Heart left ventricle (tissue), 16 donors: ENCODE measurements at regions of chr5 and their contacts with region 1.

Region 1: GRCh38 chr5:134370871-134371833 is at the start of gene UBE2B:
- DNase-seq: peak; percentile 97 to 99 (median 99)
- ATAC-seq: peak; percentile 92 to 94 (median 92)
- H3K4me3 ChIP-seq: peak within 1 kb of the TSS; percentile 70 to 99 (median 92)
- H3K27ac ChIP-seq: peak within 1 kb of the TSS; percentile 92 to 100 (median 99)
- H3K4me1 ChIP-seq: peaks cover 0 to 55% (median 29%) of the 10 kb centered on the region in 12 donors
- H3K27me3 ChIP-seq: no peaks in the 10 kb centered on the region
- CTCF ChIP-seq: no peak
- POLR2A ChIP-seq: peak in 1 of 2 donors; percentile 55
- total RNA-seq, gene UBE2B: 62.8 to 230 (median 188) TPM

Region 2: DNA sequence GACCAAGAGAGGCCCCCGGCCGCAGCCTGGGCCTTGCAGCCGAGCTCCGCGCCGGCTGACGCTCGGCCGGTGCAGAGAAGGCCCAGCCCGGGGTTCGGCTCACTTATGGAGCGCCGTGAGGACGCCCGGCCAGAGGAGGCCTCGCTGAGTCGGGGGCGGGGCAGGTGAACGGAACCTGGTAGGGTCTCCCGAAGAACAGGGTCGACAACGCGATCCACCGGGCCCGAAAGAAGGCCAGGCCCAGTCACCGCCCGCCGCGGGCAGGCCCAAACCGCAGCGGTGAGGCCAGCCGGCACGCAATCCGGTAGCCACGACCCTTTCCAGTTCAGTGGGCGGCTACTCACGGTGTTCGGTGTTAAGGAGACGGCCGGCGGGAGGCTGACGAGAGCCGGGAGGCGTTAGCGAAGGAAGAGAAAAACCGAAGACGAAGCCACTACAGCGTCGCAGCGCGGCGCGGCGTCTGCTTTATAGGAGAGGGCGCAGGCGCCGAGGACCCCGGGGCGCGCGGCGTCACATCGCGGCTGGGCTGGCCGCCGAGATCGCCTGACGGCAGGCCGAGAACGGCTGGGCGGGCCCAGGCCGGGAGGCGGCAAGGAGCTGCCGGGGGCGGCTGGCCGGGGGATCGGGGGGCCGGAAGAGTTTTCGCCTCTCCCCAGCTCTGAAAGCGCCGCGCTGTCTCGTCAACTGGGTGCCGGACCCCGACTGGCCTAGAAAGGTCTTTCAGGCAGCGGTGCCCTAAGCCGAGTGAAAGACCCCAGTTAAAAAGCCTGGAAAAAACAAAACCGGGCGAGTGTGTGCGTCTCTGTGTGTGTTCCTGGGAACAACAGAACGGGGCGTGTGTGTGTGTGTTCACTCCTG is 194.4 kb before region 1 on chr5 and contains the start of gene SKP1:
- intact Hi-C with region 1: loop called in 1 of 10 experiments (anchors 5 kb)
- DNase-seq: peak; percentile 82 to 92 (median 87)
- ATAC-seq: peak; percentile 51 to 92 (median 88)
- H3K4me3 ChIP-seq: peak within 1 kb of the TSS; percentile 70 to 99 (median 96)
- H3K27ac ChIP-seq: peak within 1 kb of the TSS; percentile 95 to 100 (median 100)
- H3K4me1 ChIP-seq: peaks cover 3 to 46% (median 22%) of the 10 kb centered on the region in 12 donors
- H3K27me3 ChIP-seq: no peaks in the 10 kb centered on the region
- CTCF ChIP-seq: peak in 1 of 12 donors; percentile 14
- POLR2A ChIP-seq: peak; percentile 51 to 95
- total RNA-seq, gene SKP1: 290 to 533 (median 459) TPM

Region 3: GRCh38 chr5:134225618-134226440 is 145.3 kb before region 1 on chr5 and contains the start of gene PPP2CA:
- intact Hi-C with region 1: loop called in 1 of 10 experiments (anchors 2 kb)
- DNase-seq: peak; percentile 98 to 100 (median 99)
- ATAC-seq: peak; percentile 92 to 97 (median 96)
- H3K4me3 ChIP-seq: peak within 1 kb of the TSS; percentile 64 to 100 (median 94)
- H3K27ac ChIP-seq: peak within 1 kb of the TSS; percentile 98 to 100 (median 99)
- H3K4me1 ChIP-seq: peaks cover 4 to 69% (median 49%) of the 10 kb centered on the region in 12 donors
- H3K27me3 ChIP-seq: no peaks in the 10 kb centered on the region
- CTCF ChIP-seq: peak in 2 of 12 donors; percentile 7 to 9
- POLR2A ChIP-seq: peak; percentile 54 to 75
- total RNA-seq, gene PPP2CA: 143 to 219 (median 180) TPM

Region 4: DNA sequence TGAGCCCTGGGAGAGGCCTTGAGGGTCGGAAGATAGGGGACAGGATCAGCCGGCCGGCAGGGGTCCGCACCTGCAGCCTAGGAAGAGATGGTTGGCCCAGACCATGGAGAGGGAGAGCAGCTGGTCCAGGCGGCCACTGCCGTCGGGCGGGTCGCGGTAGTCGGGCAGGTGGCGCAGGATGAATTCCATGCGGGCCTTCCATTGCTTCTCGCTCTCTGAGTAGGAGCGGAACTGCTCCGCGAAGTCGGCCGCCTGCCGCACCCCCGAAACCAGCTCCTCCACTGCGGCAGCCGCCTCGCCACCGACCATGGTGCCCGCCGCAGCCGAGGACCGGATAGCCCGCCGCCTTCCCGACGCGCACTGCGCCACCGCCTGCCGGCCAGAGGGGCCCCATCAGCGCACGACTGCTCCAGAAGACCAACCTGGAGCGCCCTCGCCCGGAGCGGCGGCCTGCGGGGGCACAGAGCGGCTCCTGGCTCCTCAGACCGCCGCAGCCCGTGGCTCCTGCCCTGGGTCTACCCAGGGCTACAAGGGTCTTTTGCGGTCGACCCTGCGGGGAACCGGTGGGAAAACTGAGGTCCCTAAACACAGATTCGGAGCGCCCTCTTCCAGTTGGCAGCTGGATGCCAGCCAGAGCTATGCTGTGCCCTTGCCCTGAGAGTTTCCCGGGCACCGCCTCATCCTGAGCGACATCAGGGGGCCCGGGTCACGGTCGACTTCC is 40.6 kb after region 1 on chr5 and contains the start of gene CDKN2AIPNL:
- intact Hi-C with region 1: loop called in 1 of 10 experiments (anchors 5 kb)
- DNase-seq: peak; percentile 92 to 97 (median 94)
- ATAC-seq: peak; percentile 97 to 100 (median 99)
- H3K4me3 ChIP-seq: peak within 1 kb of the TSS; percentile 62 to 98 (median 76)
- H3K27ac ChIP-seq: peak within 1 kb of the TSS; percentile 69 to 97 (median 90)
- H3K4me1 ChIP-seq: peaks cover 0 to 37% (median 22%) of the 10 kb centered on the region in 12 donors
- H3K27me3 ChIP-seq: no peaks in the 10 kb centered on the region
- CTCF ChIP-seq: peak; percentile 68 to 95 (median 78)
- POLR2A ChIP-seq: peak in 1 of 2 donors; percentile 72
- total RNA-seq, gene CDKN2AIPNL: 26.6 to 38.4 (median 32.3) TPM

Region 5: GRCh38 chr5:134436523-134437339 is 65.6 kb after region 1 on chr5:
- intact Hi-C with region 1: loop called in 1 of 10 experiments (anchors 2 kb)
- DNase-seq: peak; percentile 46 to 90 (median 73)
- ATAC-seq: peak; percentile 74 to 89 (median 85)
- H3K4me3 ChIP-seq: peak overlapping the region in 5 of 12 donors; percentile 19 to 30 (median 24)
- H3K27ac ChIP-seq: peak overlapping the region; percentile 41 to 95 (median 84)
- H3K4me1 ChIP-seq: peaks cover 18 to 40% (median 37%) of the 10 kb centered on the region in 12 donors
- H3K27me3 ChIP-seq: no peaks in the 10 kb centered on the region
- CTCF ChIP-seq: no peak
- POLR2A ChIP-seq: no peak

Region 6: DNA sequence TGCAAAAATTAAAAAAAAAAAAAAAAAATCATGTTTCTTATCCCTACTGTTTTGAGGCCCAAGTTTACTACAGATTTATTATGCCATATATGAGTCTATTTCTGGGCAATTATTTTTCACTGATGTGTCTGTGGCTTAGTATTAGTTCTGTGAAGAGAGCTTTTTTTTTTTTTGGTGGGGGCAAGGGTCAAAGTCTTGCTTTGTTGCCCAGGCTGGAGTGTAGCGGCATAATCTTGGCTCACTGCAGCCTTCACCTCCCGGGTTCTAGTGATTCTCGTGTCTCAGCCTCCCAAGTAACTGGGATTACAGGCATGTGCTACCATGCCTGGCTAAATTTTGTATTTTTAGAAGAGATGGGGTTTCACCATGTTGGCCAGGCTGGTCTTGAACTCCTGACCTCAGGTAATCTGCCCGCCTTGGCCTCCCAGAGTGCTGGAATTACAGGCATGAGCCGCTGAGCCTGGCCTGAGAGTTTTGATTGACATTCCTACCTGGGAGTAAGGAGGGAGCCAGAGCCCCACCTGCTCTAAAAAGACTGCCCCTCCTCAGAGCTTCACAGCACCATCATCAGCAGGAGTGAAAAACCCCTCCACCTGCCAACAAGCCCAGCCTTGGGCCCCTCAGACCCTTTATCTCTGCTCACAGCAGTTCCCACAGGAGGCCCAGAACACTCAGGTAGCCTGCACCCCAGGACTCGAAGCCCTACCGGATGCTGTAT is 118.2 kb after region 1 on chr5:
- intact Hi-C with region 1: no loop called
- DNase-seq: no peak
- ATAC-seq: no peak
- H3K4me3 ChIP-seq: no peak overlapping the region
- H3K27ac ChIP-seq: no peak overlapping the region
- H3K4me1 ChIP-seq: no peaks in the 10 kb centered on the region
- H3K27me3 ChIP-seq: no peaks in the 10 kb centered on the region
- CTCF ChIP-seq: no peak
- POLR2A ChIP-seq: no peak

Region 7: GRCh38 chr5:134577796-134578363 is 206.7 kb after region 1 on chr5:
- intact Hi-C with region 1: loop called in 2 of 10 experiments (anchors 5 kb)
- DNase-seq: peak; percentile 71 to 89 (median 77)
- ATAC-seq: peak in 3 of 4 donors; percentile 30 to 53 (median 51)
- H3K4me3 ChIP-seq: no peak overlapping the region
- H3K27ac ChIP-seq: peak overlapping the region in 2 of 12 donors; percentile 20 to 30
- H3K4me1 ChIP-seq: peaks cover 0 to 55% (median 33%) of the 10 kb centered on the region in 12 donors
- H3K27me3 ChIP-seq: no peaks in the 10 kb centered on the region
- CTCF ChIP-seq: peak; percentile 73 to 89 (median 84)
- POLR2A ChIP-seq: no peak

Region 8: DNA sequence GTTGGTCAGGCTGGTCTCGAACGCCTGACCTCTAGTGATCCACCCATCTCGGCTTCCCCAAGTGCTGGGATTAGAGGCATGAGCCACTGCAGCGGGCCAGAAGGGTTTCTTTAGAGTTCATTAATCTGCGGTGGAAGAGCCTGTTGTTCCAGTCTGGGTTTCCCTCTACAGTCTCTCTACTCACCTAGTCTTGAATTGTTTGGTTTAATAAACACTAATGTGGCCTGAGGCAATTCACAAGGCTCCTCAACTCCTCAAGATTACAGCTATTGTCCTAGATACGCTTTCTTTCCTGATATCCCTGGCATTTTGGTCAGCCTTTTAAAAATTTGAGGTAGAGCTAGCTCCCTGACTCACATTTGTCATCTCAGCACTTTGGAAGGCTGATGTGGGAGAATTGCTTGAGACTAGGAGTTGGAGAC is 266.0 kb after region 1 on chr5:
- intact Hi-C with region 1: loop called in 1 of 10 experiments (anchors 2 kb)
- DNase-seq: no peak
- ATAC-seq: no peak
- H3K4me3 ChIP-seq: no peak overlapping the region
- H3K27ac ChIP-seq: no peak overlapping the region
- H3K4me1 ChIP-seq: peaks cover 0 to 6% (median 0%) of the 10 kb centered on the region in 12 donors
- H3K27me3 ChIP-seq: no peaks in the 10 kb centered on the region
- CTCF ChIP-seq: no peak
- POLR2A ChIP-seq: no peak